Activated CD8-positive, alpha-beta T cell treated with anti-CD3 and anti-CD28 coated beads for 36 hours (primary cell): ENCODE measurements at regions of chr9 and their contacts with region 1.

Region 1: GRCh38 chr9:92716557-92716956 is 46.6 kb upstream of the IPPK start:
- DNase-seq: peak; percentile 90
- ATAC-seq: peak; percentile 84
- H3K4me3 Mint-ChIP-seq: no peak overlapping the region
- H3K27ac Mint-ChIP-seq: no peak overlapping the region
- H3K4me1 Mint-ChIP-seq: peaks cover 16% of the 10 kb centered on the region
- H3K27me3 Mint-ChIP-seq: no peaks in the 10 kb centered on the region
- CTCF ChIP-seq: peak; percentile 95

Region 2: DNA sequence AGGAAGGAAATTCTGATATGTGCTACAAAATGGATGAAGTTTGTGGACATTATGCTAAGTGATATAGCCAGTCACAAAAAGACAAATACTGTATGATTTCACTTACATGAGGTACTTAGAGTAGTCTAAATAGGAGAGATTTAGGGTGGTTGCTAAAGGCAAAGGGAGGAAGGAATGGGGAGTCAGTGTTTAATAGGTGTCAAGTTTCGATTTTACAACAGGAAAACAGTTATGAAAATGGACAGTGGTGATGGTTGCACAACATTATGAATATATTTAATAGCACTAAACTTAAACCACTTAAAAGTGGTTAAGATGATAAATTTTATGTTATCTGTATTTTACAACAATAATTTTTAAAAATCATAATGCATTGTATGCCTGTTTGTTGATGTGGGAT is 140.4 kb before region 1 on chr9:
- CTCF ChIA-PET with region 1: no interaction called
- POLR2A ChIA-PET with region 1: no interaction called
- intact Hi-C with region 1: no loop called
- DNase-seq: no peak
- ATAC-seq: no peak
- H3K4me3 Mint-ChIP-seq: no peak overlapping the region
- H3K27ac Mint-ChIP-seq: no peak overlapping the region
- H3K4me1 Mint-ChIP-seq: no peaks in the 10 kb centered on the region
- H3K27me3 Mint-ChIP-seq: no peaks in the 10 kb centered on the region
- CTCF ChIP-seq: no peak

Region 3: DNA sequence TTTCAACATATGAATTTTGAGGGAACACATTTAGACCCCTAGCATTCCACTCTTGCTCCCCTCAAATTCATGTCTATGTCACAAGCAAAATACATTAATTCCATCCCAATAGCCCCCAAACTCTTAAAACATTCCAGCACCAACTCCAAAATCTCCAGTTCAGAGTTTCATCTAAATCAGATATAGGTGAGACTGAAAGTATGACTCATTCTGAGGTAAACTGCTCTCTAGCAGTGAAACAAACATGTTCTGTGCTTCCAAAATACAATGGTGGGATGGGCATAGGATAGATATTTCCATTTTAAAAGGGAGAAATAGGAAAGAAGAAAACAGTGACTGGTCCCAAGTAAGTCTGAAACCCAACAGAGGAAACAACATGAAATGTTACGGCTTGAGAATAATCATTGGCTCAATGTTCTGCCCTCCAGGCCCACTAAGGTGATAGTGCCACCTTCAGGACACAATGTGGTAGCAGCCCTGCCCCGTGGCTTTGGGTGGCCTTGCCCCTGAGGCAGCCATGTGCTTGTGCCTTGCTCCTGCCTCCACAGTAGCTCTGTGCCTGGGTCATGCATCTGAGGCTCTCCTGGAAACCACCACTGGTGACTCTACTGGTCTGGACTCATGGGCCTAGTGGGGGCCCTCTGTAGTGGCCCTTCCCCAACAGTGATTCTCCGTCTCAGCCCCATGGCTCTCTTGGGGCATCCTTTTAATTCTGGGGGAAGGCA is 10.2 kb before region 1 on chr9:
- CTCF ChIA-PET with region 1: interaction called, 14 read pairs
- POLR2A ChIA-PET with region 1: no interaction called
- intact Hi-C with region 1: no loop called
- DNase-seq: peak; percentile 75
- ATAC-seq: peak; percentile 96
- H3K4me3 Mint-ChIP-seq: no peak overlapping the region
- H3K27ac Mint-ChIP-seq: peak overlapping the region; percentile 12
- H3K4me1 Mint-ChIP-seq: peaks cover 17% of the 10 kb centered on the region
- H3K27me3 Mint-ChIP-seq: no peaks in the 10 kb centered on the region
- CTCF ChIP-seq: peak; percentile 73

Region 4: GRCh38 chr9:92764988-92765936 is 48.7 kb after region 1 on chr9:
- CTCF ChIA-PET with region 1: interaction called, 15 read pairs
- POLR2A ChIA-PET with region 1: interaction called, 4 read pairs
- intact Hi-C with region 1: no loop called
- DNase-seq: peak; percentile 99
- ATAC-seq: peak; percentile 94
- H3K4me3 Mint-ChIP-seq: peak overlapping the region; percentile 86
- H3K27ac Mint-ChIP-seq: peak overlapping the region; percentile 94
- H3K4me1 Mint-ChIP-seq: peaks cover 44% of the 10 kb centered on the region
- H3K27me3 Mint-ChIP-seq: no peaks in the 10 kb centered on the region
- CTCF ChIP-seq: peak; percentile 99

Region 5: GRCh38 chr9:92790542-92791527 is 74.3 kb after region 1 on chr9:
- CTCF ChIA-PET with region 1: interaction called, 96 read pairs
- POLR2A ChIA-PET with region 1: no interaction called
- intact Hi-C with region 1: loop called (anchors 2 kb)
- DNase-seq: peak; percentile 88
- ATAC-seq: peak; percentile 95
- H3K4me3 Mint-ChIP-seq: no peak overlapping the region
- H3K27ac Mint-ChIP-seq: no peak overlapping the region
- H3K4me1 Mint-ChIP-seq: peaks cover 6% of the 10 kb centered on the region
- H3K27me3 Mint-ChIP-seq: peaks cover under 1% of the 10 kb centered on the region
- CTCF ChIP-seq: peak; percentile 91